HAP-1 (cell line): ENCODE measurements at regions of chr20 and their contacts with region 1.

Region 1: GRCh38 chr20:20860078-20860806 is 147.8 kb upstream of the RALGAPA2 start:
- DNase-seq: peak; percentile 79 to 97
- H3K4me3 ChIP-seq: no peak overlapping the region
- H3K4me1 ChIP-seq: no peaks in the 10 kb centered on the region
- H3K27me3 ChIP-seq: peaks cover 5% of the 10 kb centered on the region; the same call in 1 of the 2 replicates

Region 2: DNA sequence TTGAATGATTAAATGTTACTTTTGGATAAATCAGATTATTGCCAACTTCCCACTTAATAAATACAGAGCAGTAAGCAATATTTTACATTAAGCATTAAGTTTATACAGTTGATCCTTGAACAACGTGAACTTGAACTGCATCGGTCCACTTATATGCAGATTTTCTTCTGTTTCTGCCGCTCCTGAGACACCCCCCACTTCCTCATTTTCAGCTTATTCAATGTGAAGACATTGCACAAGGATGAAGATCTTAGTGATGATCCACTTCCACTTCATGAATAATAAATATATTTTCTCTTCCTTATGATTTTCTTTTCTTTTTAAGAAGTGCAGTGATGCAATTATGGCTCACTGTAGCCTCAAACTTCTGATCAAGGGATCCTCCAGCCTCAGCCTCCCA is 78.8 kb after region 1 on chr20:
- in situ Hi-C with region 1: no loop called
- DNase-seq: no peak
- H3K4me3 ChIP-seq: no peak overlapping the region
- H3K4me1 ChIP-seq: no peaks in the 10 kb centered on the region
- H3K27me3 ChIP-seq: no peaks in the 10 kb centered on the region

Region 3: DNA sequence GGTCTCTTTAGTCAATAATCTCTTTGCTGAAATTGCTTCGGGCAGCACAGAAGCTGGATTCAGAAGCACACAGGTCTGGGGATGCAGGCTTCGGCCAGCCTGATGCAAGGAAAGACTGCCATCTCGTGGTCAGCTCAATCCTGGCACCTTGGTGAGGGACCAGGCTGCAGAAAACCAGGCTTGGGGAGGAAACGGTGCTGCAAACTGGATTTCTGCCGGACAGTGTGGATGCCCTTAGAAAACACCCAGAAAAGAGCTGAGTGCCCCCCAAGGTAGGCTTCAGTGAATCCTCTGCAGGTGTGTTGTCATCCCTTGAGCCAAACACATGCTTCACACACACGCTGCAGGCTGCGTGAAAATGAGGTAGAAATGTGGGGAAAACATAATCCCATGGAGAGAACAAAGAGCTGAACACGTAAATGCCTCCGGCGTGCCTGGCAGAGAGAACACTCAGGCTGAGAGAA is 755.4 kb after region 1 on chr20:
- in situ Hi-C with region 1: loop called (anchors 10 kb)
- DNase-seq: peak; percentile 61 to 80
- H3K4me3 ChIP-seq: no peak overlapping the region
- H3K4me1 ChIP-seq: no peaks in the 10 kb centered on the region
- H3K27me3 ChIP-seq: peaks cover 8% of the 10 kb centered on the region